ENCODE measurements at regions of chr12 and their contacts with region 1.

Region 1: GRCh38 chr12:46268590-46269558 is at the start of gene SLC38A1:
- DNase-seq: peak; percentile 81 to 96 (median 88)
- ATAC-seq: peak; percentile 65
- H3K4me3 ChIP-seq: peak within 1 kb of the TSS; percentile 90
- H3K4me3 Mint-ChIP-seq: no peak within 1 kb of the TSS
- H3K27ac ChIP-seq: peak within 1 kb of the TSS; percentile 96 to 99
- H3K27ac Mint-ChIP-seq: no peak within 1 kb of the TSS
- H3K4me1 ChIP-seq: peaks cover 41% of the 10 kb centered on the region
- H3K4me1 Mint-ChIP-seq: peaks cover 43% of the 10 kb centered on the region
- H3K27me3 ChIP-seq: no peaks in the 10 kb centered on the region
- H3K27me3 Mint-ChIP-seq: no peaks in the 10 kb centered on the region
- CTCF ChIP-seq: no peak
- total RNA-seq, gene SLC38A1: 327 to 346 TPM

Region 2: DNA sequence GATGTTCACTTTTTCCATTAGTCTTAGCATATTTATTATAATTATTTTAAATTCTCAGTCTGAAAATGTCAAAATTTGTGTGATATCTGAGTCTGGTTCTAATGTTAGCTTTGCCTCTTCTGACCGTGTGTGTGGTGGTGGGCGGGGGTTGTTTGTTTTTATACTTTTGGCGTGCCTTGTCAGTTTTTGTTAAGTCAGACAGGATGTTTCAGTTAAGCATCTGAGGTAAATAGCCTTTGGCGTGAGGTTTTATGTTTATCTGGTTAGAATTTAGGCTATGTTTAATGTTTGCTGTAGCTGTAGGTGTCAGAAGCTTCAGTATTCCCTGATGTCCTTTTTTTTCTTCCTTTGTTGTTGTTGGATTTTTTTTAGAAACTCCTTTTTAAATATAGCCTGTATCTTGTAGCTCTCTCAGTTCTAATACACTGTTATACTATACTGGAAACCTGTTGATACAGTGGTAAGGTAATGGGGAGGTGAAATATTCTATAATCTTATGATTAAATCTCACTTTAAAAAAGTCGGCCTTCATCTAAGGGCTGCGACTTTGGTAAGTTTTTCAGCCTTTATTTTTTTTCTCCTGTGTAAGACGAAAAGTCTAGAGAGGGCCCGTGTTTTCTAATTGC is 390.1 kb before region 1 on chr12:
- CTCF ChIA-PET with region 1: no interaction called
- POLR2A ChIA-PET with region 1: no interaction called
- intact Hi-C with region 1: no loop called
- DNase-seq: peak in 8 of 14 experiments; percentile 4 to 73 (median 30)
- ATAC-seq: peak; percentile 59
- H3K4me3 ChIP-seq: no peak overlapping the region
- H3K4me3 Mint-ChIP-seq: peak overlapping the region; percentile 51
- H3K27ac ChIP-seq: peak overlapping the region in 1 of 2 donors; percentile 59
- H3K27ac Mint-ChIP-seq: peak overlapping the region; percentile 76
- H3K4me1 ChIP-seq: peaks cover 5% of the 10 kb centered on the region
- H3K4me1 Mint-ChIP-seq: peaks cover 31% of the 10 kb centered on the region
- H3K27me3 ChIP-seq: no peaks in the 10 kb centered on the region
- H3K27me3 Mint-ChIP-seq: no peaks in the 10 kb centered on the region
- CTCF ChIP-seq: no peak

Region 3: GRCh38 chr12:45990468-45991283 is 278.2 kb before region 1 on chr12 and contains the start of gene SCAF11:
- CTCF ChIA-PET with region 1: interaction called, 4 read pairs
- POLR2A ChIA-PET with region 1: interaction called, 51 read pairs
- intact Hi-C with region 1: loop called (anchors 2 to 10 kb)
- DNase-seq: peak; percentile 100
- ATAC-seq: peak; percentile 76
- H3K4me3 ChIP-seq: peak within 1 kb of the TSS; percentile 95
- H3K4me3 Mint-ChIP-seq: peak within 1 kb of the TSS; percentile 95
- H3K27ac ChIP-seq: peak within 1 kb of the TSS; percentile 98
- H3K27ac Mint-ChIP-seq: peak within 1 kb of the TSS; percentile 98
- H3K4me1 ChIP-seq: peaks cover 21% of the 10 kb centered on the region
- H3K4me1 Mint-ChIP-seq: peaks cover 56% of the 10 kb centered on the region
- H3K27me3 ChIP-seq: no peaks in the 10 kb centered on the region
- H3K27me3 Mint-ChIP-seq: peaks cover 4% of the 10 kb centered on the region
- CTCF ChIP-seq: peak; percentile 79
- total RNA-seq, gene SCAF11: 205 to 213 TPM

Region 4: DNA sequence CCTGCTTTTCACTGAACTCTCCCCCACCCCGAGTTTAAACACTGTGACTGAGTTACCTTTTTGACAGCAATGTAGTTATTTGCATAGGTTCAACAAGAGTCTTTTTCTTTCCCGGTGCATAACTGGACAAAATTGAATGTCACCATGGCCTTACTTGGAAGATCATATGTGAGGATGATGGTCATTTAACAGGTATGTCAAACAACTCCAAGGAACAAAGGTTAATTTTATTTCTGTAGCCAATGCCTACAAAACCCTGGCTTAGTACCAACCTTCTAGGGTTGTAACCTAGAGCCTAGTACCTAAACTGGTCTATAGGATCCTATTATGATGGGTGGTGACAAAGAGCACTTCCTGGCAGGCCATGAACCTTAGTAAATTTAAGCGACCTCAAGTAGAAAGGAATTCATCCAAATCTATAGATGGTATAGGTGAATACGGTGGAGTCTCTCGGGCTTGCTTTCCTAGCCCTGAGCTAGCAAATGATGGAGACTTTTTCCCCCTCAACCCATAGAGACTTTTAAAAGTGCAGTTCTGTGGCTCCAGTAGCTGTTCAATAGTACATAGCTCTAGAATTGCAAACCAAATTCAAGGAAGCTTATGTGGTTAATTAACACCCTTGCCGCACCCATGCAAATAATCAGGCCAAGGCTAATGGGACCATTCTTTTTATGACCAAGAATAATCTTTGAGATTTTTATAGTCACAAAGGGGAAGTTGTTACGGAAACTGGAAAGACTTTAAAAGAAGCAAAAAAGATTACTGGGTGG is 89.0 kb before region 1 on chr12:
- CTCF ChIA-PET with region 1: no interaction called
- POLR2A ChIA-PET with region 1: interaction called, 23 read pairs
- intact Hi-C with region 1: no loop called
- DNase-seq: no peak
- ATAC-seq: no peak
- H3K4me3 ChIP-seq: no peak overlapping the region
- H3K4me3 Mint-ChIP-seq: no peak overlapping the region
- H3K27ac ChIP-seq: peak overlapping the region in 1 of 2 donors; percentile 14
- H3K27ac Mint-ChIP-seq: peak overlapping the region; percentile 88
- H3K4me1 ChIP-seq: peaks cover 13% of the 10 kb centered on the region
- H3K4me1 Mint-ChIP-seq: peaks cover 77% of the 10 kb centered on the region
- H3K27me3 ChIP-seq: no peaks in the 10 kb centered on the region
- H3K27me3 Mint-ChIP-seq: no peaks in the 10 kb centered on the region
- CTCF ChIP-seq: no peak

Region 5: DNA sequence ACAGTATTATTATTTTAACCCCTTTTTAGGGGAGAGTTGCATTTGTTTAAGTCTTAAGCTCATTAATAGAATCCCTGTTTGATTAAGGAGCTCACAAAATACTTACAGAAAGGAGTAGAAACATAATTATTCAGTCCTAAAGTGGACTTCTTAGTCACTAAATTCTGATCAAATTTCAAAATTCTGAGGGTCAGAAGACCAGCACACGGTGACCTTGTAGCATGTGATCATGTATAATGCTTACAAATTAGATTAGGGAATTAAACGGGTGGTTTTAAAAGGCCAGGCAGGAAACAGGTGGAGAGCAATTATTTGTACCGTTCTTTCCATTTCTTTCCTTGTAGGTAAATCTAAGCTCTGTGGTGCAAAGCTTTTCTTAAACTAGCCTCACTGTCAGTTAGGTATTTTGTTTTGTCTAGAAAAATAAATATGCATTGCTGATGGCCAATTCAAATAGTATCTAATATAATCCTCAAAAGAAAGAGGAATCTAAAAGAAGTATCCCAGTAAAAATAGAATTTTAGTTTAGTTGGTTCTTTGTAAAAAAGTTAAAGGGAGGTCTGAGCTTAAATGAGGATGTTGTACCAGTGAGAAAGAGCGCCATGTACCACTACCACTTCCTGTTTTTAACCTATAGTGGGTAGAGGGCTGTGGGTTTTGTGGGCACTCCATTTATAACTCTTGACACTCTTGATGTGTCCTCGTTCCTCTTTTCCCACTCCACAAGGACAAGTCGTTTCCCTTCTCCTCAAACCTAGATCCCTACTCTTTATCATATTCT is 51.1 kb before region 1 on chr12:
- CTCF ChIA-PET with region 1: interaction called, 10 read pairs
- POLR2A ChIA-PET with region 1: interaction called, 418 read pairs
- intact Hi-C with region 1: loop called (anchors 1 to 5 kb)
- DNase-seq: peak in 10 of 14 experiments; percentile 22 to 90 (median 56)
- ATAC-seq: peak; percentile 33
- H3K4me3 ChIP-seq: peak overlapping the region; percentile 40
- H3K4me3 Mint-ChIP-seq: peak overlapping the region; percentile 85
- H3K27ac ChIP-seq: peak overlapping the region; percentile 91 to 94
- H3K27ac Mint-ChIP-seq: peak overlapping the region; percentile 96
- H3K4me1 ChIP-seq: peaks cover 78% of the 10 kb centered on the region
- H3K4me1 Mint-ChIP-seq: peaks cover 98% of the 10 kb centered on the region
- H3K27me3 ChIP-seq: no peaks in the 10 kb centered on the region
- H3K27me3 Mint-ChIP-seq: no peaks in the 10 kb centered on the region
- CTCF ChIP-seq: no peak

Region 6: GRCh38 chr12:46246021-46246700 is 22.7 kb before region 1 on chr12:
- CTCF ChIA-PET with region 1: interaction called, 4 read pairs
- POLR2A ChIA-PET with region 1: interaction called, 25 read pairs
- intact Hi-C with region 1: no loop called
- DNase-seq: peak in 5 of 14 experiments; percentile 9 to 38 (median 27)
- ATAC-seq: peak; percentile 42
- H3K4me3 ChIP-seq: no peak overlapping the region
- H3K4me3 Mint-ChIP-seq: peak overlapping the region; percentile 43
- H3K27ac ChIP-seq: peak overlapping the region; percentile 33 to 50
- H3K27ac Mint-ChIP-seq: peak overlapping the region; percentile 54
- H3K4me1 ChIP-seq: peaks cover 30% of the 10 kb centered on the region
- H3K4me1 Mint-ChIP-seq: peaks cover 97% of the 10 kb centered on the region
- H3K27me3 ChIP-seq: no peaks in the 10 kb centered on the region
- H3K27me3 Mint-ChIP-seq: no peaks in the 10 kb centered on the region
- CTCF ChIP-seq: no peak

Region 7: GRCh38 chr12:46303039-46303666 is 34.3 kb after region 1 on chr12:
- CTCF ChIA-PET with region 1: interaction called, 20 read pairs
- POLR2A ChIA-PET with region 1: interaction called, 43 read pairs
- intact Hi-C with region 1: loop called (anchors 1 to 2 kb)
- DNase-seq: peak; percentile 15 to 86 (median 44)
- ATAC-seq: peak; percentile 89
- H3K4me3 ChIP-seq: no peak overlapping the region
- H3K4me3 Mint-ChIP-seq: no peak overlapping the region
- H3K27ac ChIP-seq: no peak overlapping the region
- H3K27ac Mint-ChIP-seq: no peak overlapping the region
- H3K4me1 ChIP-seq: no peaks in the 10 kb centered on the region
- H3K4me1 Mint-ChIP-seq: peaks cover 18% of the 10 kb centered on the region
- H3K27me3 ChIP-seq: no peaks in the 10 kb centered on the region
- H3K27me3 Mint-ChIP-seq: no peaks in the 10 kb centered on the region
- CTCF ChIP-seq: peak; percentile 96

Region 8: GRCh38 chr12:46372544-46373110 is 103.8 kb after region 1 on chr12 and contains the start of gene SLC38A2:
- CTCF ChIA-PET with region 1: no interaction called
- POLR2A ChIA-PET with region 1: interaction called, 76 read pairs
- intact Hi-C with region 1: loop called (anchors 1 to 5 kb)
- DNase-seq: peak; percentile 95 to 99 (median 97)
- ATAC-seq: peak; percentile 79
- H3K4me3 ChIP-seq: peak within 1 kb of the TSS; percentile 96
- H3K4me3 Mint-ChIP-seq: peak within 1 kb of the TSS; percentile 98
- H3K27ac ChIP-seq: peak within 1 kb of the TSS; percentile 85 to 94
- H3K27ac Mint-ChIP-seq: peak within 1 kb of the TSS; percentile 99
- H3K4me1 ChIP-seq: peaks cover 32% of the 10 kb centered on the region
- H3K4me1 Mint-ChIP-seq: peaks cover 64% of the 10 kb centered on the region
- H3K27me3 ChIP-seq: no peaks in the 10 kb centered on the region
- H3K27me3 Mint-ChIP-seq: peaks cover 7% of the 10 kb centered on the region
- CTCF ChIP-seq: no peak
- total RNA-seq, gene SLC38A2: 213 to 222 TPM